HepG2 (cell line): ENCODE measurements at regions of chr14 and their contacts with region 1.

Region 1: GRCh38 chr14:21071225-21072030 is 1.3 kb downstream of the ARHGEF40 start:
- DNase-seq: peak; percentile 56
- ATAC-seq: peak; percentile 23
- H3K4me3 ChIP-seq: peak overlapping the region; percentile 86 to 90 (median 87)
- H3K27ac ChIP-seq: peak overlapping the region; percentile 77
- H3K4me1 ChIP-seq: peaks cover 53% of the 10 kb centered on the region
- H3K27me3 ChIP-seq: peaks cover 0 to 7% of the 10 kb centered on the region in 2 experiments; a peak in 1 of 5 replicates
- CTCF ChIP-seq: peak; percentile 11
- EP300 ChIP-seq: no peak; a peak in 1 of 4 replicates
- POLR2A ChIP-seq: no peak
- RAD21 ChIP-seq: no peak

Region 2: DNA sequence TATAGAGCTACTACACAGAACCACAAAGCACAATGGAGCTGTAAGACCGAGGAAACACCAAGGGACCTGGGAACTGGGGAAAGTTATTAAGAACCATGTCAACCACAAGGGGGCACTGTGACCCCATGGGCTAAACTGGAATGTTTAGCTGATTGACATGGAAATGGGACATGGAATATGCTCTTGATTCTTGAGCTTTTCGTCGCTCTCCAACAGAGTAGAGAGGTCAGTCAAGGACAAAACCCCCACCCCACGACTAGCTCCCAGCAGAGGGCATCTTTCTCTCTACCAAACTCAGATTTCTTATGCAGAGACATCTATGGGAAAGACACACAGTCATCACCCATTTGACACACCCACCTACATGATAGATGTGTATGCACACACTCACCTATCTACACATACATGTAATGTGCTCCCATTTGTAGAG is 56.7 kb before region 1 on chr14:
- CTCF ChIA-PET with region 1: interaction called, 35 read pairs
- POLR2A ChIA-PET with region 1: interaction called, 38 read pairs
- in situ Hi-C with region 1: no loop called
- intact Hi-C with region 1: loop called (anchors 1 kb)
- DNase-seq: peak; percentile 94
- ATAC-seq: peak; percentile 90
- H3K4me3 ChIP-seq: no peak overlapping the region
- H3K27ac ChIP-seq: no peak overlapping the region
- H3K4me1 ChIP-seq: peaks cover 36% of the 10 kb centered on the region
- H3K27me3 ChIP-seq: peaks cover 0 to 3% of the 10 kb centered on the region in 2 experiments; a peak in 1 of 5 replicates
- CTCF ChIP-seq: peak; percentile 99
- EP300 ChIP-seq: peak in 1 of 2 experiments; percentile 40; a peak in 1 of 4 replicates
- POLR2A ChIP-seq: 0 out of 4 replicates have a peak, but pooled peaks of 1 of the 2 experiments have one; percentile 23
- RAD21 ChIP-seq: peak; percentile 99

Region 3: DNA sequence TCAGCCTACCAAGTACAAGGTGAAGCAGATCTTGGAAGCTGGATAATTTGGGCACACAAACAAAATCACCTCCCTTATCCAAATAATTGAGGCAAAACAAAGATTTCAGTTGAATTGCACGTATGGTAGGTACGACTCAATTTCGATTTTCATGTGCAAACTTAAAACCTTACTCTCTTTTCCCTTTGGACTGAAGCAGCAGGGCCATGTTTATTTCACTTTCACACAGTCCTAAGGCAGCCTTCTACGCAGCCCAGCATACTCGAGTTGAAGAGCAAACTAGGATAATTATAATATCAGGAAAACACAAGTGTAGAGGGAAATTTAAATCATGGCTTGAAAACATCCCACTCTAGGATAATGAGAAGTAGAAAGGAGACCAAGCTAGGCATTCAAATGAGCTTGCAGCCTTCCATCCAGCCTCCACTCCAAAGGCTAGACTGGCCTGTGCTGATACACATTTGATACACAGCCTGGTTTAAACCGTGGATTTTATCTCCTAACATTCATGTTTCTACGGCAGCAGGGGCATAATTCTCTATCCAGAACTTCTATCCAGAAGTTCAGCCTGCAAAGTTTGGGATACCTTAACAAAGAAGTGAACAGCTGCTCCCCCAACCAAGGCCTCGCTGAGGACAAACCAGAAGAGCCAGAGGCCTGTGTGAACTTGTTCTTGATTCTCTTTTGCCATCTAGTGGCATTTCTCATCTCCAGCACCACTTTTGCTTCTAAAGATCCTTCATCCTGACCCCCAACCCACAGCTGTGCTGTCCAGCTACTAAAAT is 31.7 kb before region 1 on chr14:
- CTCF ChIA-PET with region 1: interaction called, 7 read pairs
- POLR2A ChIA-PET with region 1: interaction called, 37 read pairs
- in situ Hi-C with region 1: no loop called
- intact Hi-C with region 1: no loop called
- DNase-seq: peak; percentile 85
- ATAC-seq: peak; percentile 78
- H3K4me3 ChIP-seq: peak overlapping the region in 2 of 3 experiments; percentile 20 to 42; a peak in 4 of 6 replicates
- H3K27ac ChIP-seq: peak overlapping the region; percentile 22
- H3K4me1 ChIP-seq: peaks cover 76% of the 10 kb centered on the region
- H3K27me3 ChIP-seq: no peaks in the 10 kb centered on the region; a peak in 1 of 5 replicates
- CTCF ChIP-seq: peak; percentile 93
- EP300 ChIP-seq: no peak
- POLR2A ChIP-seq: no peak
- RAD21 ChIP-seq: peak; percentile 92

Region 4: GRCh38 chr14:21057803-21058675 is 13.4 kb before region 1 on chr14 and contains the start of gene RNASE8:
- CTCF ChIA-PET with region 1: interaction called, 4 read pairs
- POLR2A ChIA-PET with region 1: interaction called, 77 read pairs
- in situ Hi-C with region 1: no loop called
- intact Hi-C with region 1: loop called (anchors 2 kb)
- DNase-seq: no peak
- ATAC-seq: no peak
- H3K4me3 ChIP-seq: no peak within 1 kb of the TSS; a peak in 1 of 6 replicates
- H3K27ac ChIP-seq: peak within 1 kb of the TSS; percentile 92
- H3K4me1 ChIP-seq: peaks cover 99% of the 10 kb centered on the region
- H3K27me3 ChIP-seq: no peaks in the 10 kb centered on the region
- CTCF ChIP-seq: peak; percentile 56
- EP300 ChIP-seq: no peak
- POLR2A ChIP-seq: no peak
- RAD21 ChIP-seq: no peak
- total RNA-seq, gene RNASE8: not detected in 2 replicates

Region 5: GRCh38 chr14:21092273-21093011 is 21.0 kb after region 1 on chr14:
- CTCF ChIA-PET with region 1: interaction called, 135 read pairs
- POLR2A ChIA-PET with region 1: interaction called, 84 read pairs
- in situ Hi-C with region 1: no loop called
- intact Hi-C with region 1: loop called (anchors 1 kb)
- DNase-seq: peak; percentile 72
- ATAC-seq: peak; percentile 68
- H3K4me3 ChIP-seq: no peak overlapping the region
- H3K27ac ChIP-seq: peak overlapping the region; percentile 1
- H3K4me1 ChIP-seq: peaks cover 38% of the 10 kb centered on the region
- H3K27me3 ChIP-seq: no peaks in the 10 kb centered on the region; a peak in 1 of 5 replicates
- CTCF ChIP-seq: peak; percentile 100
- EP300 ChIP-seq: peak in 1 of 2 experiments; percentile 70; a peak in 1 of 4 replicates
- POLR2A ChIP-seq: no peak
- RAD21 ChIP-seq: peak; percentile 100

Region 6: DNA sequence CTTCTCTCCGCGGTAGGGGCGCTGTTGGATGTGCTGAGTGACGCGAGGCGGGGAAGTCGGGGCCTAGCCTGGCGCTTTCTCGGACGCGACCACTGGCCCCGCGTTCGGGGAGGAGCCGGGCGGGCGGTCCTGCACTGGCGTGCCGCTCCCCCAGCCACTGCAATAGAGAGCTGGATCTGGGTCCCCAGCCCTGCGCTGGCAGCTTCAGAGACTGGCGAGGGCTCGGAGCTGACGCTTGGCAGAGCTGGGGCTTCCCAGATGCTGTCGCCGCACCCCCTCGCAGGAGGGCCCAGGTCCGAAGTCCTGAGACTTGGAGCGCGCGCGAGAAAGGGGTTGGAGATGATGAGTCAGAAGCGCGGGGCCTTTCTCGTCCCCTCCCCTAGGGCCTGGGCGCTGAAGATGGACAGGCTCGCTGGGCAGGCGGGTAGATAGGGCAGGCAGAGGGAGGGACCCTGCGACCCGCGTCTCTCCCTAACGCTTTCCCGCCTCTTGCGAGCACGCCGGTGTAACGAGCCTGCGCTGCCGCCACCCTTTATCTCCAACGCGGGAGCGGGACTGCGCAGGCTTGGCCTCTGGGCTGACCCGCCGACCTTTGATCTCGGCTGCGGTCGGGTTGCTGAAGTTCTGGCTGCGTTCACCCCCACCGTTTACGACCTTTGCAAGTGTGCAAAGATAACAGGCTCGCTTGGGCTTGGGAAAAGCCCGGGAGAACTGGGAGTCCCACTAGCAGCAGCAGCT is 32.5 kb after region 1 on chr14:
- CTCF ChIA-PET with region 1: interaction called, 83 read pairs
- POLR2A ChIA-PET with region 1: interaction called, 141 read pairs
- in situ Hi-C with region 1: loop called (anchors 5 kb)
- intact Hi-C with region 1: loop called (anchors 1 kb)
- DNase-seq: peak; percentile 98
- ATAC-seq: peak; percentile 83
- H3K4me3 ChIP-seq: peak overlapping the region; percentile 61 to 82 (median 66)
- H3K27ac ChIP-seq: peak overlapping the region; percentile 97
- H3K4me1 ChIP-seq: peaks cover 80% of the 10 kb centered on the region
- H3K27me3 ChIP-seq: no peaks in the 10 kb centered on the region; a peak in 1 of 5 replicates
- CTCF ChIP-seq: peak; percentile 95
- EP300 ChIP-seq: peak in 1 of 2 experiments; percentile 76; a peak in 2 of 4 replicates
- POLR2A ChIP-seq: peak in 1 of 2 experiments; percentile 95; a peak in 2 of 4 replicates
- RAD21 ChIP-seq: peak; percentile 74

Region 7: DNA sequence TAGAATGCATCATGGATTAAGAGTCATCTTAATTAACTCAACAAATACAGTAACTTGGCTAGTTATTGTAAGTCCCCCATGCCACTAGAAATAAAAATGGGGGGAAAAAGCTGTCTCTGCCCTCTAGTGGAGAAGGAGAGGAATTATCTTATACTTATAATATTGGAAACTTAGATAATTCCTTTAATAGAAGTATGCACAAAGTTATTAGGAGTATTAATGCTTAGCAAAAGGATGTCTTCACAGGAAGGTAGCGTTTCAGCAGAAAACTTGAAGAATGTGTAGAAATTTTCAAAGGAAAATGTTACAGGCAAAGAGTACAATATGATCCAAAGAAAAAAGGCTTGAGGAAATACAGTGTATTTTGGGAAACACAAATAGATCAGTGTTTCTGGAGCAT is 64.6 kb after region 1 on chr14:
- CTCF ChIA-PET with region 1: no interaction called
- POLR2A ChIA-PET with region 1: no interaction called
- in situ Hi-C with region 1: no loop called
- intact Hi-C with region 1: no loop called
- DNase-seq: peak; percentile 35
- ATAC-seq: peak; percentile 45; the same call in 1 of the 3 replicates
- H3K4me3 ChIP-seq: no peak overlapping the region
- H3K27ac ChIP-seq: no peak overlapping the region
- H3K4me1 ChIP-seq: no peaks in the 10 kb centered on the region
- H3K27me3 ChIP-seq: no peaks in the 10 kb centered on the region
- CTCF ChIP-seq: peak; percentile 63
- EP300 ChIP-seq: no peak
- POLR2A ChIP-seq: no peak
- RAD21 ChIP-seq: no peak